Naive thymus-derived CD8-positive, alpha-beta T cell (primary cell): ENCODE measurements at regions of chr12 and their contacts with region 1.

Region 1: DNA sequence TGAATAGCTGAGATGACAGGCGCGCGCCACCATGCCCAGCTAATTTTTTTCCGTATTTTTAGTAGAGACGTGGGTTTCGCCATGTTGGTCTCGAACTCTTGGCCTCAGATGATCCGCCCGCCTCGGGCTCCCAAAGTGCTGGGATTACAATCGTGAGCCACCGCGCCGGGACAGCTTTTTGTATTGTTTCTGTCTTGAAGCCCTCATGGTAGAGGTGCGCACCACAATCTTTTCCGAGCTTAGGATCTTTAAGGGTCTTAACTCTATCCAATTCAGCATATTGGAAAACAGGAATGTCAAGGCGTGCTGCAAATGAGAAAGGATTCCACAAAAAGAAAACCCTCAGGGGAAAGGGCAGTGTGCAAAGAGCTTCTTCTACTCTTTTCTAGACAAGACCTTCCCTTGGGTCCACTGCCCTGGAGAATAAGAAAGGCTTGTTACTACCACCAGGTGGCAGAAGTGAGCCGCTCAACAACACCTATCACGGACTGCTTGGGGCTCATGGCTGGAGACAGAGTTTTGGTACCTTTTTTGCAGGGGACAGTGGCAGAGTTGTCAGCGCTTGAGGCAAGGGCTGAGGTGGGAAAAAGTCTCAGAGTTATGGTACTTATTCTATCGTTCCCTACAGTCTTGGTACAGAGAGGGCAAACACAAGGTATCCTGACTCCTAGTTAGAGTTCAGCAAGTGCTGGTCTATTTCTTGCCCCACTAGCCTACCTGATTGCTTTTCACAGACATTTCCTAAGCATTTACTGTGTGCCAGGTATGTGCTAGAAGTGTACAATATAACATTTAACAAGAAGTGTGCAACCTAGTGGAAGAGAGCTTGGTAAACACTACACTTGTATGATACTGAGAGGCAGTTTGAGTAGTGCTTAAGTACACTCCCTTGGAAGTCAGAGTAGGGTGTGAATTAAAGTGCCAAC is 16.4 kb upstream of the SP7 start:
- DNase-seq: peak; percentile 63 to 91 (median 82)
- ATAC-seq: peak; percentile 99 to 100
- H3K4me3 Mint-ChIP-seq: no peak overlapping the region
- H3K27ac Mint-ChIP-seq: peak overlapping the region in 3 of 10 donors; percentile 34 to 67 (median 43)
- H3K4me1 Mint-ChIP-seq: peaks cover 6 to 10% (median 8%) of the 10 kb centered on the region in 4 donors
- H3K27me3 Mint-ChIP-seq: no peaks in the 10 kb centered on the region

Region 2: GRCh38 chr12:53336181-53336681 is 16.4 kb before region 1 on chr12 and contains the start of gene SP7:
- POLR2A ChIA-PET with region 1: no interaction called
- DNase-seq: no peak
- ATAC-seq: peak in 1 of 2 donors; percentile 10
- H3K4me3 Mint-ChIP-seq: peak within 1 kb of the TSS in 2 of 10 donors; percentile 11 to 12
- H3K27ac Mint-ChIP-seq: peak within 1 kb of the TSS in 1 of 10 donors; percentile 0
- H3K4me1 Mint-ChIP-seq: peaks cover 11 to 17% (median 14%) of the 10 kb centered on the region in 4 donors
- H3K27me3 Mint-ChIP-seq: peaks cover 22 to 85% (median 31%) of the 10 kb centered on the region in 5 donors
- polyA plus RNA-seq, gene SP7: 0.05 TPM in 1 of 3 donors, not detected in the others

Region 3: GRCh38 chr12:53424626-53425514 is 72.3 kb after region 1 on chr12:
- POLR2A ChIA-PET with region 1: interaction called, 23 read pairs
- DNase-seq: no peak
- ATAC-seq: no peak
- H3K4me3 Mint-ChIP-seq: no peak overlapping the region
- H3K27ac Mint-ChIP-seq: peak overlapping the region in 1 of 10 donors; percentile 57
- H3K4me1 Mint-ChIP-seq: peaks cover 4 to 7% (median 5%) of the 10 kb centered on the region in 4 donors
- H3K27me3 Mint-ChIP-seq: no peaks in the 10 kb centered on the region

Region 4: DNA sequence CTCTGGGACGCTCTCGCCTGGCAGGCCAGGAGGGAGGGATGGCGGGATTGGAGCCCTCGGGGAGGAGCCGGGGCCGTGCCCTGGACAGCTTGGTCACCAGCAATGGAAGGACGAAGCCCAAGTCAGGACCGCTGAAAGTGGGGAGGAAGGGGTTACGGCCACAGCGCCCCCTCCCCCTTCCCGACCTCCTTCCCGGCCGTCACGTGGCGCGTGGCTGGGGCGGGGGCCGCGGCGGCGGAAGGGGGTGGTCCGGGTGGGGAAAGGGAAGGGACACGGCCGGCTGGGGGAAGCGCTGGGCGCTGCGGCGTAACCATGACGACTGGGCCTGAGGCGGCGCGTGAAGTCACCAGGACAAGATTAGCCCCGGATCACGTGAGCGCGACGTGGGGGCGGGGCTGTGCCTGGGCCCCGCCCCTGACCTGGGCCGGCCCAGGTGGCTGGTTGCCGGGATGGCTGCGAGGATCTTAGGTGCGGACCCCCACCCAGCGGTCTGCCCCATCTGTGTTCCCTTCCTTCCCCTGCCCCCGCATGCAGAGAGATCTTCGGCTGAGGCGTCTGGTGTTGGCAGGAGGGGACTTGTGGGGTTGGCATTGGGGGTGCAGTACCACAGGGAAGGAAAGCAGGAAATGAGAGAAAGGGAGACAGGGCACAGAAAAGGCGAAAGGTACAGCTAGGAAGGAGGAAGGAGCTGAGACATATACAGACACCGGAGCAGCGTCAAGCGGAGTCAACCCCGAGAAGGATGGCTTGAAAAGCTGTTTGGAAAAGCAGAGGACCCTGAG is 140.4 kb after region 1 on chr12:
- POLR2A ChIA-PET with region 1: no interaction called
- DNase-seq: peak; percentile 73 to 93 (median 82)
- ATAC-seq: peak; percentile 86 to 92
- H3K4me3 Mint-ChIP-seq: peak overlapping the region; percentile 89 to 98 (median 92)
- H3K27ac Mint-ChIP-seq: peak overlapping the region; percentile 86 to 99 (median 95)
- H3K4me1 Mint-ChIP-seq: peaks cover 20 to 54% (median 37%) of the 10 kb centered on the region in 4 donors
- H3K27me3 Mint-ChIP-seq: no peaks in the 10 kb centered on the region